Panc1 (cell line): ENCODE measurements at regions of chr13 and their contacts with region 1.

Region 1: GRCh38 chr13:72808917-72809500 is 27.1 kb downstream of the PIBF1 start:
- DNase-seq: no peak
- ATAC-seq: no peak
- H3K4me3 ChIP-seq: no peak overlapping the region
- H3K27ac ChIP-seq: no peak overlapping the region
- H3K4me1 ChIP-seq: no peaks in the 10 kb centered on the region
- H3K27me3 ChIP-seq: no peaks in the 10 kb centered on the region
- CTCF ChIP-seq: peak; percentile 49; the same call in 1 of the 2 replicates

Region 2: DNA sequence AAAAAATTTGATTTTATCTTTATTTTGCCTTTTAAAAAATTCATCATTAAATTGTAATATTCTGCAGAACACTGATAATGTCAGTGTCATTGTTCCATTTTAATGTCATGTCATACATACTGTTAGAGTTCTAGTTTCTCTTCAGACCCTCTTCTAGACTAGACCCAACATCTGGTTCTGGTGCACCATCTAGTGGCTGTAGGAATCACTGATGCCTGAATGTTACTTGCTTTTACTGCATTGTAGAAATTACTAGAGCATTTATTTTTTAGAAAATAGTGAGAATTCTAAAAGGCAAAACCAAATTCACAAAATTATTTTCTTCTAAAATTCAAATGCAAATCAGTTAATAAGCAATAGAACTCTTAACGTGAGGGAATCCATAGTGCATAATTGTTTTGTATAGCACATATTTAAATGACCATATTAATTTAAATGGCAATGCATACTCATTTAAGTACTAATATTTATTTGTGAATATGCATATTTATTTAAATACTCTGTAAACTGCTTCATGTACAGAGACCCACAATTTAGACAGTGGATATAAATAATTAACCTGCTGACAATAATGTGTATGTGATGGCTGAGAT is 899.5 kb after region 1 on chr13:
- CTCF ChIA-PET with region 1: no interaction called
- POLR2A ChIA-PET with region 1: no interaction called
- in situ Hi-C with region 1: no loop called
- intact Hi-C with region 1: loop called (anchors 5 kb)
- DNase-seq: peak; percentile 15
- ATAC-seq: peak; percentile 72; the same call in 1 of the 2 replicates
- H3K4me3 ChIP-seq: no peak overlapping the region
- H3K27ac ChIP-seq: no peak overlapping the region
- H3K4me1 ChIP-seq: no peaks in the 10 kb centered on the region
- H3K27me3 ChIP-seq: no peaks in the 10 kb centered on the region
- CTCF ChIP-seq: peak; percentile 72; the same call in 1 of the 2 replicates